Activated naive CD4-positive, alpha-beta T cell treated with anti-CD3 and anti-CD28 coated beads for 36 hours (primary cell): ENCODE measurements at regions of chr4 and their contacts with region 1.

Region 1: GRCh38 chr4:70687821-70688794 is at the start of gene UTP3:
- DNase-seq: peak; percentile 96
- H3K4me3 Mint-ChIP-seq: peak within 1 kb of the TSS; percentile 87
- H3K27ac Mint-ChIP-seq: peak within 1 kb of the TSS; percentile 99
- H3K4me1 Mint-ChIP-seq: peaks cover 30% of the 10 kb centered on the region
- H3K27me3 Mint-ChIP-seq: no peaks in the 10 kb centered on the region
- total RNA-seq, gene UTP3: 18.7 to 20.0 TPM

Region 2: GRCh38 chr4:70601422-70602039 is 86.6 kb before region 1 on chr4:
- CTCF ChIA-PET with region 1: interaction called, 3 read pairs
- intact Hi-C with region 1: loop called (anchors 1 kb)
- DNase-seq: peak; percentile 81
- H3K4me3 Mint-ChIP-seq: no peak overlapping the region
- H3K27ac Mint-ChIP-seq: no peak overlapping the region
- H3K4me1 Mint-ChIP-seq: no peaks in the 10 kb centered on the region
- H3K27me3 Mint-ChIP-seq: no peaks in the 10 kb centered on the region

Region 3: DNA sequence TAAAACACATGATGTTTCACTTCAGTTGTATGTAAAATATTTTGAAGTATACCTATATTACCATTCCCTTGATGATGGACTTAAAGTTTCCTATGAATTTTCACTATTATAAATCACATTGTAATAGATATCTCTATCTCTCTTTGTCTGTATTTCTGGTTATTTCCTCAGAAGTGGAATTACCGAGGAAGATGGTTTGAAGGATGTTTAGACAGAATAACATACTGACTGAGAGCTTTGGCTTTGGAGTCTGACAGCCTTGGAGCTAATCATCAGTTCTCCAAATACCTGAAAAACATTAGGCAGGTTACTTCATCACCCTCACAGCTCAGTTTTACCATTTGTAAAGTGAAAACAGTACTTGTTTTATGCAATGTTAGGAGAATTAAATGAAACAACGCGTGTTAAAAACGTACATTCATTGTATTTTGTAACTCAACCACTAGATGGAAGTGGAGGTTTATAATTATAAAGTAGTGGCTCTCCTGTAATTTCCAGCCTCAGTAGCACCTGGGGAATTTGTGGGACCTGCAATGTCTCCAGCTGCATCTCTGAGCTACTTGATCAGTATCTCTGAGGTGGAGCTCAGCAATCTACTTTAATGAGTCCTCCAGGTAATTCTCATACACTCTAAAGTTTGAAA is 36.1 kb before region 1 on chr4:
- CTCF ChIA-PET with region 1: interaction called, 11 read pairs
- intact Hi-C with region 1: loop called (anchors 1 kb)
- DNase-seq: peak; percentile 9
- H3K4me3 Mint-ChIP-seq: no peak overlapping the region
- H3K27ac Mint-ChIP-seq: no peak overlapping the region
- H3K4me1 Mint-ChIP-seq: no peaks in the 10 kb centered on the region
- H3K27me3 Mint-ChIP-seq: peaks cover 1% of the 10 kb centered on the region

Region 4: DNA sequence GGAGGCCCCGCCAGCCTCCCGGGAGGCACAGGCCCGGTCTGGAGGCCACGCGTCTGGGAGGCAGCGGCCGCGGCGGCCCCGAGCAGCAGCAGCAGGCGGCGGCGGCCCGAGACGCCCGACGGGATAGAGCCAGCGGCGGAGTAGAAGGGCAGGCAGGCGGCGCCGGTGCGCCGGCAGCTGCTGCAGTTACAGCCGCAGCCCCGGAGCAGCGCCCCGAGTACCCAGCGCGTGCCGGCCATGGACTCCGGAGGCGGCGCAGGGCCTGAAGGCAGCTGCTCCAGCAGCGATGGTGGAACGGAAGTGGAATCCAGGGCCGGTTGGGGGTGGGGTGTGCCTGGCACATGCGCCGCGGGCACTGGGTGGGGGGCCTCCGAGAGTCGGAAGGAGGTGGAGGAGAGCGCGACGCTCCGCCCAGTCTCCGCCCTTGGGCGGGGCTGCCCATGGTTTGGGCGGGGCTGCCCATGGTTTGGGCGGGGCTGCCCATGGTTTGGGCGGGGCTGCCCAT is 151.5 kb after region 1 on chr4 and contains the start of gene GRSF1:
- CTCF ChIA-PET with region 1: interaction called, 4 read pairs
- intact Hi-C with region 1: loop called (anchors 1 kb)
- DNase-seq: peak; percentile 97
- H3K4me3 Mint-ChIP-seq: peak within 1 kb of the TSS; percentile 98
- H3K27ac Mint-ChIP-seq: peak within 1 kb of the TSS; percentile 97
- H3K4me1 Mint-ChIP-seq: peaks cover 34% of the 10 kb centered on the region
- H3K27me3 Mint-ChIP-seq: no peaks in the 10 kb centered on the region
- total RNA-seq, gene GRSF1: 66.7 to 75.0 TPM

Region 5: DNA sequence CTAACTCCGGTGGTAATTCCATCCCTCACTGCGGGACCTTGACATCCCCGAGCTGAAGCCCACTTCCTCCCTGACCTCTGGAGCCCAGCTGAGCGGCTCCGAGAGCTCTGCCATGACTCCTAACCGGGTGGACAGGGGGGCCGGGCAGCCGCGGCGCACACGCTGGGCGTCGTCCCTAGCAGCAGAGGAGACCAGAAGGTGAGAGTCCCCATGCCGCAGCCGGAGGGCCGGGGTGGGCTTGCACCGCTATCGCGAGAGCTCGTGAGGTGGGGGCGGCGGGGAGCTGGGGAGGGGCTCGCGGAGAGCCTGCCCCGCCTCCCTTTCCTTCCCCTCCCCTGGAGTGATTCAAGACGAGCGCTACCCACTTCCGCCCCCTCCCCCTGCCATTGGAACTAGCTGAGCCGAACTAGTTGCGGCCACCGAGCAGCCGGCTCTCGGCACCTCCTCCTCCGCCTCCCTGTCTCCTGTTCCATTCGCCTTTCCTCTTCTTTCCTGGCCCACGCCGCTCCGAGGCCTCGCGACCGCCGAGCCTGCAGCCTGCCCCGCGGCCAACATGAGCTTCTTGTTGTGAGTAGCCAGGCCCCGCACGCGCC is 214.0 kb after region 1 on chr4 and contains the start of gene MOB1B:
- CTCF ChIA-PET with region 1: no interaction called
- intact Hi-C with region 1: loop called (anchors 1 kb)
- DNase-seq: peak; percentile 92
- H3K4me3 Mint-ChIP-seq: peak within 1 kb of the TSS; percentile 88
- H3K27ac Mint-ChIP-seq: peak within 1 kb of the TSS; percentile 54
- H3K4me1 Mint-ChIP-seq: peaks cover 31% of the 10 kb centered on the region
- H3K27me3 Mint-ChIP-seq: no peaks in the 10 kb centered on the region
- total RNA-seq, gene MOB1B: 14.4 to 16.2 TPM

Region 6: GRCh38 chr4:70993181-70994068 is 305.3 kb after region 1 on chr4 and contains the start of gene DCK:
- CTCF ChIA-PET with region 1: no interaction called
- intact Hi-C with region 1: loop called (anchors 1 kb)
- DNase-seq: peak; percentile 83
- H3K4me3 Mint-ChIP-seq: peak within 1 kb of the TSS; percentile 96
- H3K27ac Mint-ChIP-seq: peak within 1 kb of the TSS; percentile 91
- H3K4me1 Mint-ChIP-seq: peaks cover 34% of the 10 kb centered on the region
- H3K27me3 Mint-ChIP-seq: no peaks in the 10 kb centered on the region
- total RNA-seq, gene DCK: 32.1 to 34.1 TPM